CD4-positive, alpha-beta T cell (primary cell): ENCODE measurements at regions of chr14 and their contacts with region 1.

Region 1: GRCh38 chr14:63910583-63911363 is 58.0 kb downstream of the SYNE2 start:
- DNase-seq: no peak
- ATAC-seq: no peak
- H3K4me3 ChIP-seq: no peak overlapping the region
- H3K4me3 Mint-ChIP-seq: peak overlapping the region; percentile 59
- H3K27ac ChIP-seq: no peak overlapping the region
- H3K27ac Mint-ChIP-seq: peak overlapping the region; percentile 1
- H3K4me1 ChIP-seq: peaks cover 2% of the 10 kb centered on the region
- H3K4me1 Mint-ChIP-seq: peaks cover 49% of the 10 kb centered on the region
- H3K27me3 ChIP-seq: no peaks in the 10 kb centered on the region
- H3K27me3 Mint-ChIP-seq: no peaks in the 10 kb centered on the region
- CTCF ChIP-seq: no peak

Region 2: DNA sequence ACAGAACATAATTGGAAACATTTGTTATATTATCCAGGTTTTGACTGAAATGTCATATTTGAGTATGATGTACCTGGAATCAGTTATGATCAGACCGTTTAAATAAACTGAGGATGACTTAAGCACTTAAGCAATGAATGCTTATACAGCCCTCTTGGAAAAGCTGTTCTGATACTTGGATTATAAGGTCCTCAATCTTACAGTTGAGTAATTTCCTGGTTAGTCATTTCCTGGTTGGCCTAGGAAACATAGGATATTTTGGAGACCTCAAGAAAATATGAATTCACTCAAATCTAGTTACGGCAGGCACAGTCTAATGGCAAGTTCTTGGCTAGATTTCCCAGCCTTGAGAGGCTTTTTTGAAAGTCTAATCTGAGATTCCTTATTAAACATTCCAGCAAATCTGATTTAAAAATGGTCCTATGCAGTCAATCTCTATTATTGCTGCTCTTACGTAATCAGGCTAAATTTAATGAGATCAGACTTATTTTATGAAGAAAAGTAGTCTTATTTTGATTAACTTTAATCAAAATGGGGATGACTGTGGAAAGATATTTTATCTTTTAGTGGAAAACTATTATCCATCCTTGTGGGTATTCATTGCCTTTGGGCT is 1701.4 kb before region 1 on chr14:
- CTCF ChIA-PET with region 1: no interaction called
- POLR2A ChIA-PET with region 1: no interaction called
- intact Hi-C with region 1: no loop called
- DNase-seq: no peak
- ATAC-seq: no peak
- H3K4me3 ChIP-seq: no peak overlapping the region
- H3K4me3 Mint-ChIP-seq: no peak overlapping the region
- H3K27ac ChIP-seq: no peak overlapping the region
- H3K27ac Mint-ChIP-seq: no peak overlapping the region
- H3K4me1 ChIP-seq: no peaks in the 10 kb centered on the region
- H3K4me1 Mint-ChIP-seq: no peaks in the 10 kb centered on the region
- H3K27me3 ChIP-seq: no peaks in the 10 kb centered on the region
- H3K27me3 Mint-ChIP-seq: peaks cover 32% of the 10 kb centered on the region
- CTCF ChIP-seq: no peak

Region 3: GRCh38 chr14:63867933-63868921 is 42.5 kb before region 1 on chr14:
- CTCF ChIA-PET with region 1: no interaction called
- POLR2A ChIA-PET with region 1: interaction called, 4 read pairs
- intact Hi-C with region 1: loop called in 1 of 2 experiments (anchors 5 kb)
- DNase-seq: peak in 6 of 14 experiments; percentile 10 to 84 (median 50)
- ATAC-seq: no peak
- H3K4me3 ChIP-seq: peak overlapping the region; percentile 12
- H3K4me3 Mint-ChIP-seq: peak overlapping the region; percentile 87
- H3K27ac ChIP-seq: peak overlapping the region; percentile 38 to 41
- H3K27ac Mint-ChIP-seq: peak overlapping the region; percentile 93
- H3K4me1 ChIP-seq: peaks cover 63% of the 10 kb centered on the region
- H3K4me1 Mint-ChIP-seq: peaks cover 71% of the 10 kb centered on the region
- H3K27me3 ChIP-seq: no peaks in the 10 kb centered on the region
- H3K27me3 Mint-ChIP-seq: no peaks in the 10 kb centered on the region
- CTCF ChIP-seq: no peak